A673 (cell line): ENCODE measurements at regions of chr20 and their contacts with region 1.

Region 1: GRCh38 chr20:53809728-53810365 is 216.2 kb upstream of the ZNF217 start:
- DNase-seq: peak; percentile 33
- H3K4me3 ChIP-seq: no peak overlapping the region
- H3K27ac ChIP-seq: peak overlapping the region; percentile 4
- H3K4me1 ChIP-seq: peaks cover 21% of the 10 kb centered on the region
- H3K27me3 ChIP-seq: no peaks in the 10 kb centered on the region
- CTCF ChIP-seq: no peak

Region 2: GRCh38 chr20:53570521-53571357 is 239.1 kb before region 1 on chr20:
- CTCF ChIA-PET with region 1: no interaction called
- POLR2A ChIA-PET with region 1: no interaction called
- intact Hi-C with region 1: no loop called
- DNase-seq: no peak
- H3K4me3 ChIP-seq: no peak overlapping the region
- H3K27ac ChIP-seq: no peak overlapping the region
- H3K4me1 ChIP-seq: peaks cover 13% of the 10 kb centered on the region
- H3K27me3 ChIP-seq: no peaks in the 10 kb centered on the region
- CTCF ChIP-seq: no peak

Region 3: DNA sequence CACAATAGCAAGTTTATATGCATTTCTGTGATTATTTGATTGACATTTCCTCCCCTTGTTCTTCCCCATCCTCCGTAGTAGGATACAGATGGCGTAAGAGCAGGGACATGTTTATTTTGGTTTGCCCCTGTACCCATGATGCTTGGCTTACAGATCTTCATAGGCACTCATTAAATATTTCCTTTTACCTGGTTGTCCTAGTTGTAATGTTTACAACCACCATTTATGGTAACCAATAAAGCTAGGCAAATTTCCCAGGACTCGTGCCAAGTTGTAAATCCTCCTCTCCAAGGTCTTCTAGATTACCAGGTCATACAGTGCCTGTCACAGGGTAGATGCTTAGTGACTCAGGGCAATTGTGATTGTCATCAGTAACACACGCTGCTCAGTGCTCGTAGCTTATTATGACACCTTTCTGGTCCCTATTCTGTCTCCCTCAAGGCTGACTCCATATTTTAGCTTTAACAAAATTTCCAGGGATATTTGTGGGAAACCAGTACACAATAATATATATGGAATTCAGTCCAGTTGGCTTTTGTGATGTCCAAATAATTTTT is 339.2 kb after region 1 on chr20:
- CTCF ChIA-PET with region 1: interaction called, 11 read pairs
- POLR2A ChIA-PET with region 1: no interaction called
- intact Hi-C with region 1: no loop called
- DNase-seq: no peak
- H3K4me3 ChIP-seq: no peak overlapping the region
- H3K27ac ChIP-seq: no peak overlapping the region
- H3K4me1 ChIP-seq: no peaks in the 10 kb centered on the region
- H3K27me3 ChIP-seq: no peaks in the 10 kb centered on the region
- CTCF ChIP-seq: no peak